CD8-positive, alpha-beta T cell (primary cell): ENCODE measurements at regions of chr1 and their contacts with region 1.

Region 1: GRCh38 chr1:235328357-235329138 is at the start of gene GGPS1:
- DNase-seq: peak; percentile 96 to 99 (median 99)
- ATAC-seq: peak; percentile 76
- H3K4me3 ChIP-seq: peak within 1 kb of the TSS; percentile 83 to 94
- H3K4me3 Mint-ChIP-seq: no peak within 1 kb of the TSS
- H3K27ac ChIP-seq: peak within 1 kb of the TSS; percentile 91 to 97
- H3K27ac Mint-ChIP-seq: no peak within 1 kb of the TSS
- H3K4me1 ChIP-seq: peaks cover 59% of the 10 kb centered on the region
- H3K4me1 Mint-ChIP-seq: peaks cover 55% of the 10 kb centered on the region
- H3K27me3 ChIP-seq: no peaks in the 10 kb centered on the region
- H3K27me3 Mint-ChIP-seq: no peaks in the 10 kb centered on the region
- CTCF ChIP-seq: no peak
- total RNA-seq, gene GGPS1: 18.2 to 21.3 TPM

Region 2: GRCh38 chr1:234373064-234373958 is 955.2 kb before region 1 on chr1 and contains the start of gene COA6:
- CTCF ChIA-PET with region 1: no interaction called
- POLR2A ChIA-PET with region 1: no interaction called
- intact Hi-C with region 1: loop called (anchors 1 to 2 kb)
- DNase-seq: peak; percentile 82 to 96 (median 88)
- ATAC-seq: peak; percentile 84
- H3K4me3 ChIP-seq: peak within 1 kb of the TSS; percentile 82 to 97
- H3K4me3 Mint-ChIP-seq: peak within 1 kb of the TSS; percentile 97
- H3K27ac ChIP-seq: peak within 1 kb of the TSS; percentile 88 to 99
- H3K27ac Mint-ChIP-seq: peak within 1 kb of the TSS; percentile 99
- H3K4me1 ChIP-seq: peaks cover 19% of the 10 kb centered on the region
- H3K4me1 Mint-ChIP-seq: peaks cover 49% of the 10 kb centered on the region
- H3K27me3 ChIP-seq: no peaks in the 10 kb centered on the region
- H3K27me3 Mint-ChIP-seq: no peaks in the 10 kb centered on the region
- CTCF ChIP-seq: no peak
- total RNA-seq, gene COA6: 7.2 to 8.9 TPM

Region 3: DNA sequence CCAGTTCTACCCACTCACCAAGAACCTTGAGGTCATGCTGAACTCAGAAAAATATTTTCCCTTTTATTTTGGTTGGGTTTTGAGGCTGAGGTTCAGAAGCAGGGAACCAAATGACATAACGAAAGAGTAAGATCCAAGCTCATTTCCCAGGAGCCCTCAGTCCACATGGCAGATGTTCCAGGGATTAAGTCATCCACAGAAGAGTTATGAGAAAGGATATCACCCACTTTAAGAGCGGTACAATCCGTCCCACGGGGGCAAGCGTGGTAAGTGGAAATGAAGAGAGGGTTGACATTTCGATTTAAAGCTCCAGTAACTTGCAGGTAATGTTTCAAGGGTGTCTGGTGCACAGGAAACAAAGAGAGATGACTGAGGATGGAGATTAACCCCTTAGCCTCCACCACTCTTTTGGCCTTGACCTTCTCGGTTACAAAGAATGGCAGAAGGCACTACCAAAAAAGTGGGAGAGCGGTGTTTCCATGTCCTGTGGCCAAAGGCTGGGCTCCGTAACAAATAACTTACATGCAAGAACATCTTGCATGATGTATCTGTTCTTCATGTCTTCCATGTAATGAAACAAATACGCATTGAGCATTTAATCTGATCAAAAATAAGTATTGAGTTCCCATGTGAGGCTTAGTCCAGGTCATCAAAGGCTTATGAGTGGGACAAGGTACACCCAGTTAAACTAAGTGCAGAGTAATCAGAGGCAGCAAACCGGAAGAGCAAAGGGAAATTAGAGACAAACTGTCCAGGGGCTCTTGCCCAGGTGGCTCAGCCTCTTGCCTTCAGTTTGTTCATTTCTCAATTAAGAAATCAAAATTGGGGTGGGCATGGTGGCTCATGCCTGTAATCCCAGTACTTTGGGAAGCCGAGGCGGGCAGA is 441.3 kb before region 1 on chr1:
- CTCF ChIA-PET with region 1: no interaction called
- POLR2A ChIA-PET with region 1: no interaction called
- intact Hi-C with region 1: no loop called
- DNase-seq: no peak
- ATAC-seq: no peak
- H3K4me3 ChIP-seq: no peak overlapping the region
- H3K4me3 Mint-ChIP-seq: no peak overlapping the region
- H3K27ac ChIP-seq: no peak overlapping the region
- H3K27ac Mint-ChIP-seq: no peak overlapping the region
- H3K4me1 ChIP-seq: peaks cover 3% of the 10 kb centered on the region
- H3K4me1 Mint-ChIP-seq: peaks cover 12% of the 10 kb centered on the region
- H3K27me3 ChIP-seq: no peaks in the 10 kb centered on the region
- H3K27me3 Mint-ChIP-seq: no peaks in the 10 kb centered on the region
- CTCF ChIP-seq: no peak

Region 4: GRCh38 chr1:234925440-234926263 is 402.9 kb before region 1 on chr1:
- CTCF ChIA-PET with region 1: no interaction called
- POLR2A ChIA-PET with region 1: no interaction called
- intact Hi-C with region 1: no loop called
- DNase-seq: peak in 3 of 9 experiments; percentile 47 to 70 (median 56)
- ATAC-seq: peak; percentile 60
- H3K4me3 ChIP-seq: peak overlapping the region in 1 of 2 experiments; percentile 36
- H3K4me3 Mint-ChIP-seq: peak overlapping the region; percentile 70
- H3K27ac ChIP-seq: peak overlapping the region in 1 of 2 experiments; percentile 38
- H3K27ac Mint-ChIP-seq: peak overlapping the region; percentile 74
- H3K4me1 ChIP-seq: peaks cover 44% of the 10 kb centered on the region
- H3K4me1 Mint-ChIP-seq: peaks cover 45% of the 10 kb centered on the region
- H3K27me3 ChIP-seq: no peaks in the 10 kb centered on the region
- H3K27me3 Mint-ChIP-seq: no peaks in the 10 kb centered on the region
- CTCF ChIP-seq: no peak

Region 5: DNA sequence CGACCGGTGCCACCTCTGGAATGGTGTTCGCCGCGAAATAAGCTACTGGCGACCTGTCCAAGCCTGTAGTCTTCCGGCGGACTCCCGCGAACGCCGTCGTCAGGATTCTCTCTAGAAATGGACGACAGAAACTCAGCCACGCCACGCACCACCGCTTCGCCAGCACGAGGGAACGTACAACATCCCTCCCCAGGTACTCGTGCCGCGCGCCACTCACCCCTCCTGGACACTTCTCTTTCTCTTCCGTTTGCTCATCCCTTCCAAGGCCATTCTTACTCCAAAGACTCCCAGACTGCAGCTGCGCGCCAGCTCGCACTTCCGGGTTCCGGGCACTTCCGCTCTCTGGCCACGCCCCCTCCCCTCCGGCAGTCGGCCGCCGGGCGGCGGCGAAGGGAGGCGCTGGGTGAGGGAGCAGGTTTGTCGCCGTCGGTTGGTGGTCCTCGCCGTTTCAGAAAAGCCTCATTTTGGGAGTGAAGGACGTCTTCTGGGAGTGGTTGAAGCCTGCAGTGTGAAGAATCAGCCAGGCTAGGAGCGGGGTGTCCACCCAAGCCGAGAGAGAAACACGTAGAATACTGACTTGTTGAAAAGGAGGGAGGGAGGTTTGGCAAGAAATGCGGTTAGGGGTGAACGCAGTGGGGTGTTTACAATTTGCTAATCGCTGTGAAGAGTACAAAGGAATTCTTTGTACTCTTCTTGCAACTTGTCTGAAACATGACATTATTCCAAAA is 167.4 kb before region 1 on chr1 and contains the start of gene RBM34:
- CTCF ChIA-PET with region 1: no interaction called
- POLR2A ChIA-PET with region 1: interaction called, 6 read pairs
- intact Hi-C with region 1: loop called (anchors 1 to 10 kb)
- DNase-seq: peak; percentile 83 to 96 (median 93)
- ATAC-seq: peak; percentile 87
- H3K4me3 ChIP-seq: peak within 1 kb of the TSS; percentile 89 to 91
- H3K4me3 Mint-ChIP-seq: peak within 1 kb of the TSS; percentile 99
- H3K27ac ChIP-seq: peak within 1 kb of the TSS; percentile 91 to 93
- H3K27ac Mint-ChIP-seq: peak within 1 kb of the TSS; percentile 100
- H3K4me1 ChIP-seq: peaks cover 40% of the 10 kb centered on the region
- H3K4me1 Mint-ChIP-seq: peaks cover 18% of the 10 kb centered on the region
- H3K27me3 ChIP-seq: no peaks in the 10 kb centered on the region
- H3K27me3 Mint-ChIP-seq: no peaks in the 10 kb centered on the region
- CTCF ChIP-seq: no peak
- total RNA-seq, gene RBM34: 243 to 267 TPM

Region 6: DNA sequence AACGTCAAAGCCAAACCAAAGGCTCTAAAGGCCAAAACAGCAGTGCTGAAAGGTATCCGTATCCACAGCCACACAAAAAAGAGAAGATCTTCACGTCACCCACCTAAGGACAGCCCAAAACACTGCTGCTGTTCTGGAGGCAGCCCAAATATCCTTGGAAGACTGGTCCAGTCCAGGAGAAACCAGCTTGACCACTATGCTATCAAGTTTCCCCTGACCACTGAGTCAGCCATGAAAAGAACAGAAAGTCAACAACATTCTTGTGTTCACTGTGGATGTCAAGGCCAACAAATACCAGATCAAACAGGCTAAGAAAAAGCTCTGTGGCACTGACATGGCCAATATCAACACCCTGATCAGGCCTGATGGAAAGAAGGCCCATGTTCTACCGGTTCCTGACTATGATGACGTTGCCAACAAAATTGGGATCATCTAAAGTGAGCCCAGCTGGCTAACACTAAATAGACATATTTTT is 32.6 kb before region 1 on chr1:
- CTCF ChIA-PET with region 1: no interaction called
- POLR2A ChIA-PET with region 1: interaction called, 3 read pairs
- intact Hi-C with region 1: loop called (anchors 2 to 5 kb)
- DNase-seq: no peak
- ATAC-seq: no peak
- H3K4me3 ChIP-seq: no peak overlapping the region
- H3K4me3 Mint-ChIP-seq: no peak overlapping the region
- H3K27ac ChIP-seq: peak overlapping the region in 1 of 2 experiments; percentile 85
- H3K27ac Mint-ChIP-seq: peak overlapping the region; percentile 60
- H3K4me1 ChIP-seq: peaks cover 59% of the 10 kb centered on the region
- H3K4me1 Mint-ChIP-seq: peaks cover 62% of the 10 kb centered on the region
- H3K27me3 ChIP-seq: no peaks in the 10 kb centered on the region
- H3K27me3 Mint-ChIP-seq: no peaks in the 10 kb centered on the region
- CTCF ChIP-seq: no peak

Region 7: GRCh38 chr1:235367000-235367908 is 38.7 kb after region 1 on chr1 and contains the start of gene TBCE:
- CTCF ChIA-PET with region 1: interaction called, 4 read pairs
- POLR2A ChIA-PET with region 1: interaction called, 3 read pairs
- intact Hi-C with region 1: loop called (anchors 1 to 5 kb)
- DNase-seq: peak; percentile 60 to 89 (median 78)
- ATAC-seq: peak; percentile 97
- H3K4me3 ChIP-seq: peak within 1 kb of the TSS; percentile 65 to 89
- H3K4me3 Mint-ChIP-seq: peak within 1 kb of the TSS; percentile 97
- H3K27ac ChIP-seq: peak within 1 kb of the TSS; percentile 41 to 55
- H3K27ac Mint-ChIP-seq: peak within 1 kb of the TSS; percentile 91
- H3K4me1 ChIP-seq: peaks cover 10% of the 10 kb centered on the region
- H3K4me1 Mint-ChIP-seq: peaks cover 30% of the 10 kb centered on the region
- H3K27me3 ChIP-seq: no peaks in the 10 kb centered on the region
- H3K27me3 Mint-ChIP-seq: no peaks in the 10 kb centered on the region
- CTCF ChIP-seq: no peak
- total RNA-seq, gene TBCE: 6.0 to 7.1 TPM

Region 8: DNA sequence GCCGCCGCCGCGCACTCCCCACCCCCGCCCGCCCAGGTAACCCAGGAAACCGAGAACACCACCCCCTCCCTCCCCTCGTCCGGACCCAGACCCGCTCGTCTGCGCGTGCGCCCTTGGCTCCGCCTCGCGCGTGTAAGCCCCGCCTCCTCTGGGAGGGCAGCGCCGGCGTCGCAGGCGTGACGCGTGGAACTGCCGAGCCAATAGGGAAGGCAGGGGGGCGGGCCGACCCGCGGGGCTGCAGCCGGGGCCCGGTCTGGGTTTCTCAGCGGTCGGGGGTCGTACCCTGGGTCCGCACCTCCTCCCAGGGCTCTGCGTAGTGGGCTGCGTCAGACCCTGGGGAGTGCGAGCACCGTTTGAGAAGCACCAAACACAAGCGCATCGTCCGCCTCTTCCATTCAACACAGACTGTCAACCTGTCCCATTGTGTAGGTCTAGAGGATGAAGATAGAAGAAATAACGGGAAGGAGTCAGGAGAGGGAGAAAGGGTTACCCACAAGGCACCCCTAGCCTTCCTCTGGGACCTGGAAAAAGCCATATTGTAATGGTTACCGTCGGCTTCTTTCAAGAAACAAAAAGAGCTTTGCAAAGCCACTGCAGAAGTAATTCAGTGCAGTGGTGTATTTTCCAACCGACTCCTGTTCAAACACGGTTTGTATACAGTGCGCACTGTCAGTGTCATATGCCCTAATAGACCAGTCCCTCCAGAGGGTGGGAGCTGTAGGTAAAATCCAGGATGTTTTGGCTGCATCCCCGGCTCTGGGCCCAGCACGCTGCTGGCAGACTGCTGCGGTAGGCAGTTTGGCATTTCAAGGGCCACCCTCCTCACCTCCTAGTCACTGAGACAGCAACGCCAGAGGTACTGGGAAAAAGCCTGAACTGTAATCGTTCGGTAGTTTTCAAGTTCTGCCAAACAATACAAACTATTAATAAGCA is 538.6 kb after region 1 on chr1:
- CTCF ChIA-PET with region 1: no interaction called
- POLR2A ChIA-PET with region 1: no interaction called
- intact Hi-C with region 1: loop called (anchors 5 kb)
- DNase-seq: peak; percentile 96 to 99 (median 98)
- ATAC-seq: peak; percentile 75
- H3K4me3 ChIP-seq: peak overlapping the region; percentile 74 to 89
- H3K4me3 Mint-ChIP-seq: peak overlapping the region; percentile 95
- H3K27ac ChIP-seq: peak overlapping the region; percentile 95 to 99
- H3K27ac Mint-ChIP-seq: peak overlapping the region; percentile 99
- H3K4me1 ChIP-seq: peaks cover 27% of the 10 kb centered on the region
- H3K4me1 Mint-ChIP-seq: peaks cover 52% of the 10 kb centered on the region
- H3K27me3 ChIP-seq: no peaks in the 10 kb centered on the region
- H3K27me3 Mint-ChIP-seq: no peaks in the 10 kb centered on the region
- CTCF ChIP-seq: no peak